ENCODE measurements at regions of chr7 and their contacts with region 1.

Region 1: DNA sequence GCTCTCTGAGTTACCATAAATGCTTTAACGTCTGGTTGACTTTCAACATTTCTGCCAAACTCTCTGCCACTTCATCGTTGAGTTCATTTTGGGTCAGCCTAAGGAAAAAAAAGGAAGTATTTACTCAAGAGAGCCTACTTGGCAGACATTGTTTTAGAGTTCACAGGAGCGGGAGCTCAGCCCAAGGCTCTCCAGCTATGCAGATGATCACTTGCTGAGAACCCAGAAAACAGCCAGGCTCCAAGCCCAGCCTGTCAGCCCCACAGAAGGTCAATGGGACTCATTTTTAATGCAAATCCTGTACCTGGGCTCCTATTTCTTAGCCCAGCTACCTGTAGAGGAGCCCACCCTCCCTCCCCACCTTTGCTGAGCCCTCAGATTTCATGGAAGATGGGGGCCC is 45.5 kb downstream of the NOD1 start:
- H3K4me3 Mint-ChIP-seq: no peak overlapping the region
- H3K27ac Mint-ChIP-seq: peak overlapping the region; percentile 85
- H3K4me1 Mint-ChIP-seq: peaks cover 100% of the 10 kb centered on the region
- H3K27me3 Mint-ChIP-seq: no peaks in the 10 kb centered on the region

Region 2: DNA sequence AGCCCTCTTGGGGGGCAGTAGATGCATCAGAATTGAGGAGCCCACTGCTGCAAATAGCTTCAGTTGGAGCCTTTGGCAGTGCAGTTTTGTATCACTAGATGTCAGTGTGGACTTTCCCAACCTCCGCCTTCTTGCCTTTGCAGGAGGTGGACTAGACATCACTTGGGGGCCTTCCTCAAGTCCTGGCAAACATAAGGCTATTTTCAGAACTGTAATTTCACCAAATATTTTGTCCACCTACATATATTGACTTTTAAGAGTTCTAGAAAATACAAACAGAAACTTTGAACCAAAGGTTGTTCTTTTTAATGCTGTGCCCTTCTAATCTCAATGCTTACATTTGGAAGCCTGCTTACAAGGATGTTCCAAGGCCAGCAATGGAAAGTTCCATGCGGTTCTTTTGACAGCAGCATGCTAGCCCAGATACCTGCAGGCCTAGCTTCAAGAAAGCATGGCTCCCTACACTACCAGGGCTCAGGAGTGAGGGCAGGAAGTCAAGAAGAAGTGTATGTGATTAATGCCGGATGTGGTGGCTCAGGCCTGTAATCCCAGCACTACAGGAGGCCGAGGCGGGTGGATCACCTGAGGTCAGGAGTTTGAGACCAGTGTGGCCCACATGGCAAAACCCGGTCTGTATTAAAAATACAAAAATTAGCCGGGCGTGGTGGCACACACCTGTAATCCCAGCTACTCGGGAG is 156.7 kb before region 1 on chr7:
- intact Hi-C with region 1: loop called (anchors 5 kb)
- H3K4me3 Mint-ChIP-seq: no peak overlapping the region
- H3K27ac Mint-ChIP-seq: no peak overlapping the region
- H3K4me1 Mint-ChIP-seq: peaks cover 28% of the 10 kb centered on the region
- H3K27me3 Mint-ChIP-seq: no peaks in the 10 kb centered on the region

Region 3: GRCh38 chr7:30469303-30469702 is 36.2 kb after region 1 on chr7:
- intact Hi-C with region 1: loop called (anchors 5 kb)
- H3K4me3 Mint-ChIP-seq: peak overlapping the region; percentile 48
- H3K27ac Mint-ChIP-seq: peak overlapping the region; percentile 79
- H3K4me1 Mint-ChIP-seq: peaks cover 100% of the 10 kb centered on the region
- H3K27me3 Mint-ChIP-seq: no peaks in the 10 kb centered on the region

Measured in dendritic cell treated with granulocyte-macrophage colony-stimulating factor and Interleukin-4, amounts not matched to agents 40 ng/mL and 50 ng/mL, for 4 days (primary cell).